Activated B cell treated with CpG ODN at 0.5 μM for 24 hours (primary cell): ENCODE measurements at regions of chr22 and their contacts with region 1.

Region 1: DNA sequence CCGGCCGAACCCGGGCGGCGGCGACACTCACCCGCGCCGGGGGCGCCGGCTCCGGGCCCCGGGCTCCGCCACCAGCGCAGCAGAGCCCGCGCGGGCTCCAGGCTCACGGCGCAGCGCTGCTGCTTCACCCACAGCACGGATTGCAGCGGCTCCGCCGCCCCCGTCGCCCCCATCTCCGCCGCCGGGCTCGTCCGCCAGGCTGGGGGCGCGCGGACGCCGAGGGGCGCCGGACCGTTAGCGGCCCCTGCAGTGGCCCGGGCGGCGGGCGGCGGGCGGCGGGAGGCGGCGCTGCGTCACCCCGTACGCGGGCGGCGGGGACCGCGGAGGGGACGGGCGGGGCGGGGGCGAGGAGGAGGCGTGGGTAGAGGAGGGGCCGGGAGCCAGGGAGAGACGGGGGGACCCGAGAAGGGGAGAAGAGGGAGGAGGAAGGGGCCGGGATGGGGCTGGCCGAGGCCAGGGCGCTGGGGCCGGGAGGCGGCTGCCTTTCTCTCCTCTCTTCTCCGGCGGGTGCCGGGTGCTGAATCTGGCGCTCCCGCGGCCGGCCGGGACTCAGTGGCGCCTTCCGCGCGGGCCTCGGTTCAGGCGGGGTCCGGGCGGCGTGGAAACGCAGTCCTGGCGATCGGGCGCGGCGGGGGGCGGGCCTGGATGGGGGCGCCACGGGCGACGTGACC is at the start of gene CERK:
- DNase-seq: peak; percentile 61
- ATAC-seq: peak; percentile 51
- H3K4me3 Mint-ChIP-seq: peak within 1 kb of the TSS; percentile 89
- H3K27ac Mint-ChIP-seq: peak within 1 kb of the TSS; percentile 82
- H3K4me1 Mint-ChIP-seq: peaks cover 42% of the 10 kb centered on the region
- H3K27me3 Mint-ChIP-seq: no peaks in the 10 kb centered on the region
- CTCF ChIP-seq: no peak
- total RNA-seq, gene CERK: 13.8 and 16.9 TPM in 2 replicates

Region 2: DNA sequence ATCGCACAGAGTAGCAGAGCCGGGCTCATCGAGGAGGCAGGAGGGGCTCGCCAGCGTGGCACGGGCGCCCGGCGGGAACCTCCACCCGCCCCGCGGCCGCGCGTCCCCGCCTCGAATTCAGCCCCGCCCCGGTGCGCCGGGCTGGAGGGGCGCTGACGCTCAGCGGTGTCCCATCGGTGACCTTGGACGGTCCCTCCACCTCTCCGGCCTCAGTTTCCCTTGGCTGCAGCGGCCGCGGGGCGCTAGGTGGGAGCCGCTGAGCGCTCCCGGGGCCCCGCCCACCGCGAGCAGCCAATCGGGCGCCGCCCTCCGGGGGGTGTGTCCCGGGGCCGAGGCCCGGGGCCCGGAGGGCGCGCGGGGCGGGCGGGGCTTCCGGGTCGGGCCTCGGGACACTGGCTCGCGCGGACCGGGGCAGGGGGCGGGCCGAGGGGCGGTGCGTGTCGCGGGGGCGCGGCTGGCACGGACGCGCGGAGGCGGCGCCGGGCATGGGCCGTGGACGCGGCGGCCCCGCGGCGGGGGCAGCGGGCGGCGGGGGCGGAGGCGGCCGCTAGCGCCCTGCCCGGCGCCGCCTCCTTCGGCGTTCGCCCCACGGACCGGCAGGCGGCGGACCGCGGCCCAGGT is 588.0 kb before region 1 on chr22 and contains the start of gene PPARA:
- CTCF ChIA-PET with region 1: no interaction called
- POLR2A ChIA-PET with region 1: no interaction called
- intact Hi-C with region 1: loop called (anchors 5 kb)
- DNase-seq: peak; percentile 92
- ATAC-seq: peak; percentile 80
- H3K4me3 Mint-ChIP-seq: peak within 1 kb of the TSS; percentile 87
- H3K27ac Mint-ChIP-seq: peak within 1 kb of the TSS; percentile 73
- H3K4me1 Mint-ChIP-seq: peaks cover 23% of the 10 kb centered on the region
- H3K27me3 Mint-ChIP-seq: no peaks in the 10 kb centered on the region
- CTCF ChIP-seq: no peak
- total RNA-seq, gene PPARA: 17.7 and 23.0 TPM in 2 replicates

Region 3: DNA sequence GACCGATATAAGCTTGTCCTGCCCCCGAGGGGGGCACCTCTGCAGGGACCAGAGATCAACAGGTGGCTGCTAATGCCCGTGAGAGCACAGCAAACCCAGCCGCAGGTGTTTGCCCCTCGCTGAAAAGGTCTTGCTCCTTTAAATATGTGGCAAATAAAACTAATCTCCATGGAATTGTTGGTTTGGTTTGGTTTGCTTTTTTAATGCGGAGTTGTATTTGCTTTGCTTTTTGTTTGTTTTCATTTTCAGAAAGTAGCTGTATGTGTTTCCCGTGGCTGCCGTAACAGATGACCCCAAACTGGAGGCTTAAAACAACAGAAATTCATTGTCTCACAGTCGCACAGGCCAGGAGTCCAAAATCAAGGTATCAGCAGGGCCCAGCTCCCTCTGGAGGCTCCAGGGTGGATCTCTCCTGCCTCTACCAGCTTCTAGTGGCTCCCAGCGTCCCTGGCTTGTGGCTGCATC is 293.7 kb before region 1 on chr22:
- CTCF ChIA-PET with region 1: no interaction called
- POLR2A ChIA-PET with region 1: no interaction called
- intact Hi-C with region 1: no loop called
- DNase-seq: no peak
- ATAC-seq: no peak
- H3K4me3 Mint-ChIP-seq: no peak overlapping the region
- H3K27ac Mint-ChIP-seq: no peak overlapping the region
- H3K4me1 Mint-ChIP-seq: no peaks in the 10 kb centered on the region
- H3K27me3 Mint-ChIP-seq: peaks cover 9% of the 10 kb centered on the region
- CTCF ChIP-seq: no peak

Region 4: GRCh38 chr22:46674367-46674781 is 63.7 kb before region 1 on chr22:
- CTCF ChIA-PET with region 1: no interaction called
- POLR2A ChIA-PET with region 1: no interaction called
- intact Hi-C with region 1: loop called (anchors 2 kb)
- DNase-seq: peak; percentile 73
- ATAC-seq: peak; percentile 81
- H3K4me3 Mint-ChIP-seq: peak overlapping the region; percentile 76
- H3K27ac Mint-ChIP-seq: peak overlapping the region; percentile 77
- H3K4me1 Mint-ChIP-seq: peaks cover 34% of the 10 kb centered on the region
- H3K27me3 Mint-ChIP-seq: no peaks in the 10 kb centered on the region
- CTCF ChIP-seq: no peak

Region 5: GRCh38 chr22:46762238-46763050 is 24.3 kb after region 1 on chr22 and contains the start of gene TBC1D22A:
- CTCF ChIA-PET with region 1: interaction called, 11 read pairs
- POLR2A ChIA-PET with region 1: interaction called, 28 read pairs
- intact Hi-C with region 1: loop called (anchors 1 kb)
- DNase-seq: peak; percentile 93
- ATAC-seq: peak; percentile 72
- H3K4me3 Mint-ChIP-seq: peak within 1 kb of the TSS; percentile 99
- H3K27ac Mint-ChIP-seq: peak within 1 kb of the TSS; percentile 99
- H3K4me1 Mint-ChIP-seq: peaks cover 63% of the 10 kb centered on the region
- H3K27me3 Mint-ChIP-seq: no peaks in the 10 kb centered on the region
- CTCF ChIP-seq: no peak
- total RNA-seq, gene TBC1D22A: 73.0 and 85.9 TPM in 2 replicates

Region 6: DNA sequence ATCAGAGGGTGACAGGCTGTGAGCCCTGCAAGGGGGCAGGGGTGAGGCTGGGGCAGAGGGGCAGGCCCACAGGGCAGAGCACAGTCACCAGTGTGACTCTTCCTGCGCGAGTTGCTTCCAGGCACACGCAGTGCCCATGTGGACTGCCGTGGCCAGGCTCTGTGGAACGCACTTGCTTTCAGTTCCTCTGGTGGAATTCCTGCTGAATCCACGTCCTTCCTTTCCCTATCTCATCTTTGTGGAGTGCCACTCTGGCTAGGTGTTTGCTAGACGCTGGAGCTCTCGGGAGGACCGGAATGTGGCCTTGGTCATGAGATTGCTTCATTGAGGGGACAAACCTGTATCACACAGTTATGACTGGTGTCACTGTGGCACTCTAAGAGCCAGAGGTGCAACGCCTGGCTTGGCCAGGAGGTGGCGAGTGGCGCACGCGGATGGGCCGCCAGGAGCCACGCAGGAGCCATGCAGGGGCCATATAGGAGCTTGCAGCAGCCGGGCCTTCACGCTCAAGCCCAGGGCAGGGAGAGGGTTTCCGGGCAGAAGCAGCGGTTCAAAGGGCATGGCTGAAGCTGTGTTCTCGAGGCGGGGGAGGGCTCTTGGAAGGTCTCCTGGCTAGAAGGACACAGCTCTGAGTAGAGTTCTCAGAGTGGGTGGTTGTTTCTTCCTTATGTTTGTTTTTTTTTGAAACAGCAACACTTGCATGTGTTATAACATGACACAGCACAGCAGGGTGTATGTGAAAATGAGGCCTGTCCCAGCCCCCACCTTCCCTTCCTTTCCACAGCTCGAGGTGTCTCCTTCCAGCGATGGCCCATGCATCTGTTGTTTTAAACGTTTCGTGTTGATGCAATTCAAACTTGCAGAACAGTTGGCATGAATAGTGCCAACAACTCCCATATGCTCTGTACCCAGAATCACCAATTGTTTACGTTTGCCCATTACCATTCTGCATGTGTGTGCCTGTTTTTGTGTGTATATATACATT is 60.5 kb after region 1 on chr22:
- CTCF ChIA-PET with region 1: interaction called, 25 read pairs
- POLR2A ChIA-PET with region 1: interaction called, 4 read pairs
- intact Hi-C with region 1: loop called (anchors 1 kb)
- DNase-seq: peak; percentile 69
- ATAC-seq: peak; percentile 90
- H3K4me3 Mint-ChIP-seq: no peak overlapping the region
- H3K27ac Mint-ChIP-seq: peak overlapping the region; percentile 18
- H3K4me1 Mint-ChIP-seq: peaks cover 36% of the 10 kb centered on the region
- H3K27me3 Mint-ChIP-seq: no peaks in the 10 kb centered on the region
- CTCF ChIP-seq: peak; percentile 28

Region 7: DNA sequence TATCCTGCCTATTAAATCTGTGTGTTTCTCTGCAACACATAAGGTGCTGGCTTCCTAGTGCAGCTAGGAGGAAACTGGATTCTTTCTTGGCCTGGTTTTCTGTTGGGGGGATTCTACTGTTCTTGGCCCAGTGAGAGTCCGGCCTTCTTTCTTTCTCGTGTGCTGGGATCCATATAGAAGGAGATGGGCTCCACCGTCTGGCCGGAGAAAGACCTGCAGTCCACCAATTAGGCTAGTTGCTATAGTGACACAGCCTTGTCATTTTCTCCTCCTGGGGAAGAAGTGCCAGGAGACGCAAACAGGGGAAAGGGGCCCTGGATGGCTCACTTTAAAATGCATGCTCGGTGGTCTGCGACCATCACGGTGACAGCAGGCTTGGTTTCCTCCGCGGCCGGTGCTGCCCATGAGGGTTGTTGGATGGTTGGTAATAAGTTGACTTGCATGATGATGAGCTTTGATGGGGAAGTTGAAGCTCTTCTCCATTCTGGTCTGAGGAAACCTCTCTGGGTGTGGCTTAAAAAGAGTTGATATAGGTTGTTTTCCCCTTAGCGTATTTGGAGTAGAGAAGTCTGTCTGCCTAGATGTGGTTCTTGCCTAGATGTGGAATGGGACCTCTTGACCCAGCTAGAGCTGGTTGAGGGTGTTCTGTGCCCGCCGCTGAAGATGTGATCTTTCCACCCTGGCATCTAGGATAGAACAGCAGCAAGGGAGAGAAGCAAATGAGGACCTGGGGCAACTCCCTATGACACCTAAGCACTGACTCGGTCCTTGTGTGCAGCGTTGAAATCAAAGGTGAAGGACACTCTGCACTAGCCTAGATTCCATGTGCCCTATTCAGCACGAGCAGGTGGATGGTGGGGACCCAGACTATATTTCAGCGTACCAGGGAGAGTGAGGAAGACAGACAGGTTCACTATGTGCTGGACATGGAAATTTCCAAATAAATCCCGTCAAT is 1754.5 kb after region 1 on chr22:
- CTCF ChIA-PET with region 1: no interaction called
- POLR2A ChIA-PET with region 1: no interaction called
- intact Hi-C with region 1: loop called (anchors 2 kb)
- DNase-seq: peak; percentile 32
- ATAC-seq: peak; percentile 71
- H3K4me3 Mint-ChIP-seq: no peak overlapping the region
- H3K27ac Mint-ChIP-seq: no peak overlapping the region
- H3K4me1 Mint-ChIP-seq: peaks cover 7% of the 10 kb centered on the region
- H3K27me3 Mint-ChIP-seq: peaks cover 54% of the 10 kb centered on the region
- CTCF ChIP-seq: peak; percentile 26